ENCODE measurements at regions of chr12 and their contacts with region 1.

Region 1: DNA sequence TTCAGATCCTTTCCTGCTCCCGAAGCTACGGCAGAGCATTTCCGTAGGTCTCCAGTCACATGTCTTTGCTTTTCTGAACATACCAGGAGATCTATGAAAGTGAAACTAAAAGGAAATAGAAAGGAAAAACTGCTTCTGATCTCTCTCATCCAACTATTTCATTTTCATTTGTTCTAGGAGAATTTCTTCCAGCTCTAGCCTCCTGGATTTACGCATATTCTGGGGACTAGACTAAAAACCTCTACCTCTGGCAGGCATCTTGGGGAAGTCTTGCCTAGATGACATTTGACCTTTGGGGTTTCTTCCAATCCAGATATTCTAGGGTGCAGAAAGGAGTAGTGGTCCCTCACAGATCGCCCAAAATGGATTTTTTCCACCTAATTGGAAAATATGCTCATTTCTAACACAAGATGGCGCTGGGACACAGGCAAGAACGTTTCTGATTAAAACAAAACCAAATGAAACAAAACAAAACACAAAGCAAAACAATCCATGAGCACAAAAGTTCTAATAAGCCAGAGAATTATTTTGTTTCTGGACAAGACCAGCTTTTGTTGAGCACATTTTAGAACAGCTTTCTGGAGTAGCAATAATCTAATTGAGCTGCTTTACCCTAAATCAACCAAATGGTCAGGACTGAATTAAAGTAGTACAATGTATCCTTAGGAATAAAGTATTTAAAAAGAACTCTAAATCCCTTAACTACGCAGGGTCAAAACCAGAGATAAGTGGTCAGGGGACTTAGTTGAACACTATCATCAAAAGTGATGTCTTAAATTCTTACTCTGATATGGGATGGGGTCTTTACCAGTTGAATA is 12.3 kb upstream of the PARP11 start:
- DNase-seq: peak; percentile 45
- H3K4me3 Mint-ChIP-seq: peak overlapping the region; percentile 42
- H3K27ac Mint-ChIP-seq: peak overlapping the region; percentile 34
- H3K4me1 Mint-ChIP-seq: peaks cover 7% of the 10 kb centered on the region
- H3K27me3 Mint-ChIP-seq: peaks cover 6% of the 10 kb centered on the region

Region 2: DNA sequence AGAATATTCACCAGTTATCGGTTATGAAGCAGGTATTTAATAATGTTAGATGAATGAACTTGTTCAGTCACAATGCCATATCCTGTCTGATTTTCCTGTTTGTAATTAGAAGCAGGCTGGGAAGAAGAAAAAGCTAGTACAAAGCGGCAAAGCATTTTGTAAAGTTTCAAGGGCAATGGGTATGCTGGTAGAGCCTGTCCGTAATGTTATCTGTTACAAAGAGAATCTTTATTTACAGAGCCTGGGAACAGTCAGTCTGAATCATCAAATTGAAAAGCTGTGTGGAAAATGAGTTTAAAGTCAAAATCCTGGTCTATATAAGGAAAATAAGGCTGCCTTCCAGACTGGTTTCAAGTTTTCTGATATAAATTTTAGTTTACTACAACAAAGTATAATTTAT is 52.7 kb before region 1 on chr12:
- CTCF ChIA-PET with region 1: no interaction called
- POLR2A ChIA-PET with region 1: no interaction called
- intact Hi-C with region 1: no loop called
- DNase-seq: no peak
- H3K4me3 Mint-ChIP-seq: no peak overlapping the region
- H3K27ac Mint-ChIP-seq: no peak overlapping the region
- H3K4me1 Mint-ChIP-seq: peaks cover 31% of the 10 kb centered on the region
- H3K27me3 Mint-ChIP-seq: no peaks in the 10 kb centered on the region

Region 3: DNA sequence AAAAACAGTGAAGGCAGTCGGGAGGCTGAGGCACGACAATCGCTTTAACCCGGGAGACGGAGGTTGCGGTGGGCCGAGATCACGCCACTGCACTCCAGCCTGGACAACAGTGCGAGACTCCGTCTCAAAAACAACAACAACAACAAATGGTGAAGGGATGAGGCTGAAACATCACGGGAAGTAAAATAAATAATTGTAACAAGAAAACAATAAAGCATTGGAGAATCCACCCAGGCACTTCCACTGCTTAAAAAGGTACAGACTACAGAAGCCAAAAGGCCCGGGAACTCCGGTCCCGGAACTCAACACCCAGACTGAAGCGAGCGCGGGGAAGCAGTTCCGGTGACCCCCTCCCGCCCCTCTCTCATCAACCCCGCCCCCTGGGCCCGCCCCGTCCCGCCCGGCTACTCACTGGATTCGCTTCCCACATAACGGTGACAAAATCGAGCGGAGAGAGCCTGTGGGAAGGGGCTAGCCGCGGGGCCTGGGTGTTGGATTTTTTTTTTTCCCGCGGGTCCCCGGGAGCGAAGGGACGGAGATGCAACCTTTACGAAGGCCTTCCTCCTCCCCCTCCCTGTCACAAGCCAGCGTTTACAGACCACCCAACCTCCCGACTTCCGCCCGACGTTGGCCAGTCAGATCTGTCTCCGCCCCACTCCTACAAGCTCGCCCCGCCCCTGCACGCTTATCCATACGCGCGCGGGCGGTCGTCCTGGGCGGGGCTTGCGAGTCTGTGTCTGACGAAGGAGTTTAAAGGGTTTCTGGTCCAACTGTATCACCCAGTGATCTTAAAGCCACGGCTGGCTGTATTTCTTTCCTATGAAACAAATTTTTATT is 12.5 kb before region 1 on chr12 and contains the start of gene PARP11:
- CTCF ChIA-PET with region 1: interaction called, 10 read pairs
- POLR2A ChIA-PET with region 1: no interaction called
- intact Hi-C with region 1: no loop called
- DNase-seq: peak; percentile 98
- H3K4me3 Mint-ChIP-seq: peak within 1 kb of the TSS; percentile 91
- H3K27ac Mint-ChIP-seq: peak within 1 kb of the TSS; percentile 97
- H3K4me1 Mint-ChIP-seq: peaks cover 46% of the 10 kb centered on the region
- H3K27me3 Mint-ChIP-seq: no peaks in the 10 kb centered on the region
- total RNA-seq, gene PARP11: 16.6 to 17.8 TPM

Region 4: DNA sequence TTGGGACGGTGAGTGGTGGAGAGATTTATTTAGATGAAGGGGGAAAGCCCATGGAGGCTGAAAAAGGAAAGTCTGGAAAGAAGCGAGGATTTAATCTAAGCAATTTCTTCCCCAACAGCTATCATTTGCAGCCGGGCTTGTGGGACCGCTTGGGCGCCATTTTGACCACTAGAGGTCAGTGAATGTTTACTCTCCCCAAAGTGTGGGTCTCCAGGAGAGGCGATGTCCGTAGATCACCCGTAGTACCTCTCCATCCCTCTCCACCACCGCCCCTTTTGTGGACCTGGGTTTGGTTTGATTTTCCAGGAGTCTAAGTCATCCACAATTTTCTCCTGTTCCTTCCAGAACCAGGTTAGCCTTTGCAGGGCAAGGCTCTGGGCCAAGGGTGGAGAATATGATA is 79.0 kb after region 1 on chr12:
- CTCF ChIA-PET with region 1: interaction called, 84 read pairs
- POLR2A ChIA-PET with region 1: no interaction called
- intact Hi-C with region 1: loop called (anchors 1 kb)
- DNase-seq: no peak
- H3K4me3 Mint-ChIP-seq: no peak overlapping the region
- H3K27ac Mint-ChIP-seq: no peak overlapping the region
- H3K4me1 Mint-ChIP-seq: peaks cover 18% of the 10 kb centered on the region
- H3K27me3 Mint-ChIP-seq: no peaks in the 10 kb centered on the region

Region 5: GRCh38 chr12:3988519-3989448 is 103.3 kb after region 1 on chr12:
- CTCF ChIA-PET with region 1: interaction called, 67 read pairs
- POLR2A ChIA-PET with region 1: interaction called, 4 read pairs
- intact Hi-C with region 1: no loop called
- DNase-seq: peak; percentile 57
- H3K4me3 Mint-ChIP-seq: no peak overlapping the region
- H3K27ac Mint-ChIP-seq: peak overlapping the region; percentile 47
- H3K4me1 Mint-ChIP-seq: peaks cover 30% of the 10 kb centered on the region
- H3K27me3 Mint-ChIP-seq: no peaks in the 10 kb centered on the region

Region 6: GRCh38 chr12:4037747-4038312 is 152.3 kb after region 1 on chr12:
- CTCF ChIA-PET with region 1: interaction called, 43 read pairs
- POLR2A ChIA-PET with region 1: no interaction called
- intact Hi-C with region 1: no loop called
- DNase-seq: no peak
- H3K4me3 Mint-ChIP-seq: no peak overlapping the region
- H3K27ac Mint-ChIP-seq: no peak overlapping the region
- H3K4me1 Mint-ChIP-seq: peaks cover 4% of the 10 kb centered on the region
- H3K27me3 Mint-ChIP-seq: no peaks in the 10 kb centered on the region

Region 7: GRCh38 chr12:4141348-4142270 is 256.1 kb after region 1 on chr12:
- CTCF ChIA-PET with region 1: interaction called, 15 read pairs
- POLR2A ChIA-PET with region 1: no interaction called
- intact Hi-C with region 1: no loop called
- DNase-seq: no peak
- H3K4me3 Mint-ChIP-seq: no peak overlapping the region
- H3K27ac Mint-ChIP-seq: peak overlapping the region; percentile 90
- H3K4me1 Mint-ChIP-seq: peaks cover 81% of the 10 kb centered on the region
- H3K27me3 Mint-ChIP-seq: no peaks in the 10 kb centered on the region